GM18951 (cell line): ENCODE measurements at regions of chr9 and their contacts with region 1.

Region 1: GRCh38 chr9:35116898-35117551 is 1.4 kb upstream of the ATOSB start:
- POLR2A ChIP-seq: no peak

Region 2: DNA sequence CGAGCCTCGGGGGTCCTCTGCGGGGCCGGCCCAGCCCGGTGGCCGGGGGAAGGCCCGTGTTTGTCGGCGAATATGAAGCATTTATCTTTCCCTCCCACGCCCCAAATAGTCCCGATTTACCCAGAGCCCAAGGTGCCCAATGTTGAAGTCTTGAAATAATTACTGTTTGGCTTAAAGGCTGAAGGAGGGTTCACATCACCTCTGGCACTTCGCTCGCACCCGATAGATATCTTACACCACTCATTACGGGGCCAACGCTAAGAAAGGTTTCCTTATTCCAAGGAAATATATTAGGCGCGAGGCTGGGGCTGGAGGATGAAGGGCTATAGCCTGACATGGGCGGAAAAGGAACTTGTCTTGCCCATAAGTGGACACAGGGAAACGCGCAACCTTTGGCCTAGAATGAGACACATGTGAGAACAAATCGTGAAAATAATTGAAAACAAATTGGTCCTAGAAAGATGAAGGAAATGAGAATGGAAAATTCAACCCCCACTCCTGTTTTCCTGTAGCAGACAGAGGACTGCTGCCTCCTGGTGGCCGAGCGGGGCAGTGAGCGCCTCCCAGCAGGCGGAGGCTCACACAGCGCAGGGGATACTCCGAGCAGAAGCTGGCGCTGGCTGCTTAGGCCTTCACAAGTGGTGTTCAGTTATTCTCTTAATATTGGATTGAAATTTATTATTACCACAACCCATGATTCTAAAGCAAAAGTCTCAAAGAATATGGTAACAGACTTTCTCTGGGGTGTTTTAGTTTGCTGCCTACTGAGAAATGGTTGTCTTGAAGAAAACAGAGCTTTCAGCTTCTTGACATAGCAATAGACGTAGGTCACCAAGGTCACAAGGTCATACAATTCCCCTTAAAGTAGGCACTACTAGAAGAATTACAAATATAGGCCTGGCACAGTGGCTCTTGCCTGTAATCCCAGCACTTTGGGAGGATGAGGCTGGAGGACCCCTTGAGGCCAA is 415.0 kb before region 1 on chr9:
- in situ Hi-C with region 1: no loop called
- POLR2A ChIP-seq: no peak

Region 3: GRCh38 chr9:35476596-35476995 is 359.6 kb after region 1 on chr9:
- in situ Hi-C with region 1: loop called (anchors 5 kb)
- POLR2A ChIP-seq: no peak

Region 4: GRCh38 chr9:36400332-36401163 is 1283.5 kb after region 1 on chr9:
- in situ Hi-C with region 1: no loop called
- POLR2A ChIP-seq: peak; percentile 66